ENCODE measurements at regions of chr9 and their contacts with region 1.

Region 1: DNA sequence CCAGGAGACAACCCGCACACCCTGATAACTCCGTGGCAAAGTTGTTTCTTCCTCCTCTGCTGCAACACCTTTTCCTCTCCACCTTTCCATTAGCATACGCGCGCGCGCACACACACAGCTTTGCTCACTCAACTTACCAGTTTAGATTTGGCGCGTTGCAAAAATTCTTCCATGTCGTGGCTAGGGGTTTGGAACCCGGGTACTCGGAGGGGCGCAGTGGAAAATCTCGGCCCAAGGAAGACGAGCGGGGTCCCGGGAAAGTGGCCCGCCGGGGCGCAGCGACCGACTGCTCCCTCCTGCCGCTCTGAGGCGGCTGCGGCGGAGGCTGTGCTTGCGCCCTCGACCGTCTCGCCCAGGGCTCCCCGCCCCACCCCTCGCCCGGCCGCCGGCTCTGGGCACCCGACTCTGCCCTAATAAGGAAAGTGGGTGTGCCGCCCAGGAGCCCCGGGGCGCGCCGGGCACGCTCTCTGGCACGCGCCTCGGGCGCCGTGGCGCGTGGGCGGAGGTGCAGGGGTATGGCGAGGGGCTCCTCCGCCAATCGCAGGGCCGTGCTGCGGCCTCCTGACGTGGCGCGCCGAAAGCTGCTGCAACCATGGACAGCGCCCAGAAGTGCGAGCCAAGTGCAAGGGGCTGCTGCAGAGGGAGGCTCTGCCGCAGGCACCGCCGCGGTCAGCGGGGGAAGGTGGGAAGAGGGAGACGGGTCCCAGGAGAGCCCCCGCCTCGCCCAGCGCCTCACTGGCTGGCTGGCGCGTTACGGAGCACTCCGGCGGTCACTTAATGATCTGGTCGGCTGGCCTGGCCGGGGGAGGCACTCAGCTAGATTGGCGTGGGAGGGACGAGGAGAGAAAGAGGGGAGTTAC is at the start of gene PRUNE2:
- DNase-seq: peak; percentile 55
- H3K4me3 ChIP-seq: peak within 1 kb of the TSS; percentile 33 to 45
- H3K27ac ChIP-seq: peak within 1 kb of the TSS; percentile 56 to 72
- H3K4me1 ChIP-seq: no peaks in the 10 kb centered on the region
- H3K27me3 ChIP-seq: no peaks in the 10 kb centered on the region
- CTCF ChIP-seq: peak in 1 of 4 experiments; percentile 9
- POLR2A ChIP-seq: peak; percentile 32
- total RNA-seq, gene PRUNE2: 58.6 to 78.9 TPM

Region 2: DNA sequence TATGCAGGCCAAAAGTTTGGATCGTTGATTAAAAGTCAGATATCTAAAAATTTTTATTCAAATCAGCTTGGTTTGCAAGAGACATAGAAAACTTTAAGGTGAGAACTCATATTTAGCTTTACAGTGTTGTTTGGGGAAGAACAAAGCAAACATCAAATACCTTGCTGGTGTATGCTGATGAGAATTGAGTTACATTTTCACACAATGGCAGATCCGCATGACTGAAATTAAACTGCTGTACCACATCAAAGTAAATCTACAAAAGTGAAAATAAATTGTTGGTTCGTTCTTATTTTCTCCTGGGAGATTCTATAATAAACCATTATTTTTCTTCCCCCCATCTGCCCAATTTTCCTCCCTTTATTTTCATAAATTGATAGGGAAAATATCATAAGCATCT is 1213.7 kb before region 1 on chr9:
- intact Hi-C with region 1: no loop called
- DNase-seq: no peak
- H3K4me3 ChIP-seq: no peak overlapping the region
- H3K27ac ChIP-seq: no peak overlapping the region
- H3K4me1 ChIP-seq: no peaks in the 10 kb centered on the region
- H3K27me3 ChIP-seq: no peaks in the 10 kb centered on the region
- CTCF ChIP-seq: no peak
- POLR2A ChIP-seq: no peak

Region 3: GRCh38 chr9:76761448-76761847 is 144.6 kb before region 1 on chr9:
- intact Hi-C with region 1: loop called (anchors 5 kb)
- DNase-seq: no peak
- H3K4me3 ChIP-seq: no peak overlapping the region
- H3K27ac ChIP-seq: no peak overlapping the region
- H3K4me1 ChIP-seq: peaks cover 3% of the 10 kb centered on the region
- H3K27me3 ChIP-seq: no peaks in the 10 kb centered on the region
- CTCF ChIP-seq: peak in 3 of 4 experiments; percentile 14 to 33 (median 18)
- POLR2A ChIP-seq: no peak

Region 4: DNA sequence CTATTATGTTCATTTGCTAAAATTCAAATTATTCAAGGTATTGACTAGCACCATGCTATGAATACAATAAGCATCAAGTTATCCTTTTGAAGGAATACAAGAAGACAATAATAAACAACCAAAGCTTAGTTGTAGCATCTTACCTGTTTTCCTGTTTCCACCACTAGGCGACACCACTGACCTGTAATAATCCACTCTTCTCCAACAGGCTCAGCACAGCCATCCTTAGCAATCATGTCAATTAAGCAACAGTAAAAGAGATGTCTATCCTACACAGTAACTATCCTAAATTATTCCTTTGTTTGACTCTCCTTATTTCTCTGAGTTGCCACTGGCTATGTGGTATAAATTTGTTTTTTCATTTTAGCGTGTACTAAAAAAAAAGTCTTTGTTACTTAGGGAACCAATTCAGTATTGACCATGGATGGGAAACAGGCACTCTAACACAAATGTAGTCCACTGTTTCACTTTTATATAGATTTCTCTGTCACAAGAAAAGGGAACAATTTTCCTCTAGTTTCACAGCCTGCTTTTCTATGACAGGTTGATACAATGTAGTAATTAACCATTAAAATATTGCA is 95.6 kb before region 1 on chr9:
- intact Hi-C with region 1: loop called (anchors 5 kb)
- DNase-seq: peak; percentile 53
- H3K4me3 ChIP-seq: no peak overlapping the region
- H3K27ac ChIP-seq: peak overlapping the region in 1 of 2 donors; percentile 19
- H3K4me1 ChIP-seq: no peaks in the 10 kb centered on the region
- H3K27me3 ChIP-seq: no peaks in the 10 kb centered on the region
- CTCF ChIP-seq: peak; percentile 30 to 92 (median 84)
- POLR2A ChIP-seq: no peak

Region 5: DNA sequence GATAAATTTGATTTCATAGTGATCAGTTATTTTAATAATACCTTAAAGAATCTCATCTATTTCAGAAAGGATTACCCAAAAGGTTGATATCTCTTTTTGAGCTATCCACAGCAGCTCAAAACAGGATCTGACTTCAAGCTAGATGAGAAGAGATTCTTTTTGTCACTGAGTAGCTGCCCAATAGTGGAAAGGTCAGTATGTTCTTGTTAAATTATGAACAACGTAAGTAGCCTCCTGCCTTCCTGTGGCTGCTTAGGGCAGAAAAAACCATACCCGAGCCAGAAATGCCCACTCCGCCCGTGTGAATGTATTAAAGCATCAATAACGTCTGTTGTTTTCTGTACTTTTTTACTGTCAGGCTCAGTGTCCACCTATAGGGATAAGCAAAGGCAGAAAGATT is 51.2 kb after region 1 on chr9:
- intact Hi-C with region 1: no loop called
- DNase-seq: no peak
- H3K4me3 ChIP-seq: no peak overlapping the region
- H3K27ac ChIP-seq: no peak overlapping the region
- H3K4me1 ChIP-seq: no peaks in the 10 kb centered on the region
- H3K27me3 ChIP-seq: no peaks in the 10 kb centered on the region
- CTCF ChIP-seq: no peak
- POLR2A ChIP-seq: no peak